ENCODE measurements at regions of chr2 and their contacts with region 1.

Region 1: GRCh38 chr2:24827321-24828237 is 34.4 kb downstream of the CENPO start:
- DNase-seq: peak; percentile 71 to 94 (median 86)
- H3K4me3 ChIP-seq: peak overlapping the region in 32 of 59 donors; percentile 4 to 50 (median 22)
- H3K27ac ChIP-seq: peak overlapping the region in 53 of 59 donors; percentile 1 to 85 (median 66)
- H3K27me3 ChIP-seq: no peaks in the 10 kb centered on the region
- CTCF ChIP-seq: peak; percentile 77 to 96 (median 91)

Region 2: GRCh38 chr2:24418166-24418841 is 409.3 kb before region 1 on chr2:
- intact Hi-C with region 1: loop called in 1 of 2 experiments (anchors 5 kb)
- DNase-seq: no peak
- H3K4me3 ChIP-seq: no peak overlapping the region
- H3K27ac ChIP-seq: no peak overlapping the region
- H3K27me3 ChIP-seq: no peaks in the 10 kb centered on the region
- CTCF ChIP-seq: no peak

Region 3: GRCh38 chr2:24435391-24436316 is 391.9 kb before region 1 on chr2:
- intact Hi-C with region 1: no loop called
- DNase-seq: peak in 8 of 10 donors; percentile 47 to 79 (median 58)
- H3K4me3 ChIP-seq: peak overlapping the region in 30 of 59 donors; percentile 1 to 45 (median 18)
- H3K27ac ChIP-seq: peak overlapping the region in 56 of 59 donors; percentile 6 to 88 (median 66)
- H3K27me3 ChIP-seq: no peaks in the 10 kb centered on the region
- CTCF ChIP-seq: peak in 1 of 56 donors; percentile 8

Region 4: DNA sequence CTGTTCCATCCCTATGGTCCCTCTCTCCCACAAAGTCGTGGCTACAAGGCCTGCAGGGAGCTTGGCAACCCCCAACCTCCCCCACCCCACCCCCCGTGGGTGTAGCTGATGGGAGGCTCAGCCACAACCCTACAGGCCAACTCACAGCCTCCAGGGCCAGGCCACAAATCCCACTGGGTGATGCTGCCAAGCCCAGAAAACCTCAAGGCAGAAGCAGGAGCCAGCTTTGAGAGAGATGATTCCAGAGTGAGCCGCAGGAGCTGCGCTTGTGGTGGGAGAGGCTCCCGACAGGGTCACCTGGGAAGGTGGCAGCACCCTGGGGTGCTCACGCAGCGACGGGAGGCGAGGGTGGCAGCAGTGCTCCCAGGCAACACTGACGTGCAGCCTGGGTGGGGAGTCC is 47.7 kb after region 1 on chr2:
- intact Hi-C with region 1: loop called in 1 of 2 experiments (anchors 5 kb)
- DNase-seq: no peak
- H3K4me3 ChIP-seq: no peak overlapping the region
- H3K27ac ChIP-seq: peak overlapping the region in 4 of 59 donors; percentile 26 to 78 (median 36)
- H3K27me3 ChIP-seq: no peaks in the 10 kb centered on the region
- CTCF ChIP-seq: no peak

Region 5: GRCh38 chr2:24959761-24960160 is 132.2 kb after region 1 on chr2:
- intact Hi-C with region 1: loop called in 1 of 2 experiments (anchors 10 kb)
- DNase-seq: no peak
- H3K4me3 ChIP-seq: no peak overlapping the region
- H3K27ac ChIP-seq: no peak overlapping the region
- H3K27me3 ChIP-seq: no peaks in the 10 kb centered on the region
- CTCF ChIP-seq: no peak

Region 6: DNA sequence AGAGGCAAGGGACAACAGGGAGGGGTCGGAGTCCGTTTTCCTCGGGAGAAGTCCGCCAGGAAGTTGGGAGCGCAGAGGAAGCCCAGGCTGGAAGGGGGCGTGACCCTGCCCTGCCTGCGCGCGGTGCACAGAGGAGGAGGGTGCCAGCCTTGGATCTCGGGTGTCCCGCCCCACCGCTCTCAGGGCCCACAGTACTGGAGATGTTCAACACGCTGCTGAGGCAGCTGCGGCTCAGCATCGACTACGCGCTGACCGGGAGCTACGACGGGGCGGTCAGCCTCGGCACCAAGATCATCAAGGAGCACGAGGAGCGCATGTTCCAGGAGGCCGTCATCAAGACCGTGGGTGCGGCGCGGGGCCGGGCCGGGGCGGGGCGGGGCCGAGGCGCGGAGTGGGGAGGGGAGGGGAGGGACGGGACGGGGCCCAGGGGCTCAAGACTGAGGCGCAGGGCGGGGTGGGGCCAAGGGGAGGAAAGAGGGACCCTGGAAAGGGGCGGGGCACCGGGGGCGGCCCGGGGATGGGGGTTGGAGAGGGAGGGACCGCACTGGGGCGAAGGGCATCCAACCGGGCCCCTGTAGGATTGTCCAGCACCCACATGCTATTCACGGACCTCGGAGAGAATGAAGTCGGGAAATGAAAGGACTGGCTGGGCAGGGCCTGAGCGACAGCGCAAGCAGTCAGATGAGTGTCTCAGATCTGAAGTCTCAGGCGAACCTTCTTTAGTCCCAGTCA is 304.2 kb after region 1 on chr2:
- intact Hi-C with region 1: loop called (anchors 5 to 10 kb)
- DNase-seq: no peak
- H3K4me3 ChIP-seq: peak overlapping the region in 9 of 59 donors; percentile 8 to 42 (median 10)
- H3K27ac ChIP-seq: no peak overlapping the region
- H3K27me3 ChIP-seq: no peaks in the 10 kb centered on the region
- CTCF ChIP-seq: no peak